Naive thymus-derived CD4-positive, alpha-beta T cell (primary cell): ENCODE measurements at regions of chr7 and their contacts with region 1.

Region 1: DNA sequence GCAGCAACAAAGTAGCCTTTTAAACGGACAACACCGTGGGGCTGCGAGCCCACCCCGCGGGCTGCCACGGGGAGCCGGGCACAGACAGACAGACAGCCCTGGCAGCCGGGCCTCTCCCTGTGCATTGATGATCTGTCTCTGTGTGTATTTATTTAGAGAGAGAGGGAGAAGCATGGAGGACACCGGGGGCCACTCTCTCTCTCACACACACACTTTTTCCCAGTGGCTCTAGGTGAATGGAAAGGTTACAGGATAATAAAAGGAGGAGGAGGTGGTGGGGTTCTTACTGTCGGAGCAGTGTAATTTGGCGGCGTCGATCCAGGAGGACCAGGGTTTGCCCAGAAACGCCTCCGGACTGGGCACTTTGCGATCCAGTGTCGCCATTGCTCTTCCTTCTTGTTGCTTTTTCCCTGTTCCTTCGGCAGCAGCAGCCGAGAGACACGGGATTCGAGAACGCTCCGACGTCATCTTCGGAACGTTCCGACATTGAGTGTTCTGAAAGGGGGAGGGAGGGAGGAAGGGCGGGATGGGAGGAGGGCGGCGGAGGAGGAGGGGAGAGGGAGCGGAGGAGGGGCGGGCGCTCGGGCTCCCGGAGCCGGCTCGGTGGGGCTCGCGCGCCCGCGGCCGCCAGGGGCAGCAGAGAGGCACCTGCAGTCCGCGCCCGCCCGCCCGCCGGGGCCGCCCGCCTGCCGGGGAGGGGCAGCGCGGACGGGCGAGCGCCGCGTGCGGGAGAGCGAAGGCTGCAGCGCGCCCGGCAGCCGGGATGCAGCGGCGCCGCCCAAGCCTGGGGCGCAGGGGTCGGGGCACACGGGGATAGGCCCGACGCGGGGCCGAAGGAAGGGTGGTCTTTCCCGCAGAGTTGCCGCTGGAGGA is at the start of gene ATXN7L1:
- DNase-seq: peak; percentile 75 to 94 (median 87)
- ATAC-seq: peak; percentile 99
- H3K4me3 ChIP-seq: peak within 1 kb of the TSS; percentile 97
- H3K4me3 Mint-ChIP-seq: peak within 1 kb of the TSS; percentile 90 to 100 (median 99)
- H3K27ac ChIP-seq: peak within 1 kb of the TSS; percentile 81
- H3K27ac Mint-ChIP-seq: peak within 1 kb of the TSS; percentile 85 to 99 (median 98)
- H3K4me1 ChIP-seq: peaks cover 10 to 33% of the 10 kb centered on the region in 2 donors
- H3K4me1 Mint-ChIP-seq: peaks cover 34 to 73% (median 52%) of the 10 kb centered on the region in 7 donors
- H3K27me3 ChIP-seq: no peaks in the 10 kb centered on the region
- H3K27me3 Mint-ChIP-seq: peaks cover 0 to 34% (median 0%) of the 10 kb centered on the region in 5 donors
- total RNA-seq, gene ATXN7L1: 18.5 to 52.4 (median 46.7) TPM

Region 2: DNA sequence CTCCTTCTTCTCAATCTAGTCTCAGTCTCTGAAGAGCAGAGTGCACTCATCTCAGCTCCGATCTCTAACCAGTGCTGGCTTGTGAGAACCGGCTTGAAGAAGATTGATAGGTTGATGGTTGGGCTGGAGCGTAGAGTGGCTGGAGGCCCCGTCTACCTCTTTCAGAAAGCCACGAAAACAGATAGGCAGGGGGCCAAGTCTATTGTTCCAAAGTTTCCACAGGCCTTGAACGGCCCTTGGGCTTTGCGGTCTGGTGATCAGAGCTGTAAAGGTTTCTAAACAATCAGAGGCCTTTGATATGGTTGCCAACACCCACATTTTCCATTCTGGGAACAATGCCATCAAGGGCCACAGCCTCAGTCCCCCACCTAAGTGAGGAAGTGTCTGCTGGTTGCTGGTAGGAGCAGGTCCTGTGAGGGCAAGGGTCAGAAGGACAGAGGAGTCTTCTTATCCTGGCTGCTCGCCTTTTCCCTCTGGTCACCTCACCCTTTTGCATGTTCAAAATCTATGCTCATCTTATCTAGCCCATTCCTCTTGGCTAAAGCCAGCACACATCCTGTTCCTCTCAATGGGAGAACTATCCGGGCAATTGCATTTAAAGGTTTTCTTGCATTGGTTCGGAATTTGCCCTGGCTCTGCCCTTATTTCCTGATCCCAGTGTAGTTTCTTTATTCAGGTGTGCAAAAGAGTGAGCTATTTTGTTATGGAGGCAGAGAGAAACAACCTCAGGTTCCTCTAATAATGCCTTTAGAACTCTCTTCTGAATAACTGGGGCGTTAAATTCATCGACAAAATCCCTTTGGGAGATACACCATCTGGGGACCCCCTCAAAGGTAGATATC is 932.6 kb before region 1 on chr7:
- CTCF ChIA-PET with region 1: no interaction called
- POLR2A ChIA-PET with region 1: no interaction called
- intact Hi-C with region 1: loop called in 1 of 2 experiments (anchors 5 kb)
- DNase-seq: peak; percentile 31 to 85 (median 68)
- ATAC-seq: peak; percentile 23
- H3K4me3 ChIP-seq: peak overlapping the region; percentile 40
- H3K4me3 Mint-ChIP-seq: peak overlapping the region; percentile 77 to 95 (median 88)
- H3K27ac ChIP-seq: peak overlapping the region; percentile 87
- H3K27ac Mint-ChIP-seq: peak overlapping the region; percentile 95 to 100 (median 100)
- H3K4me1 ChIP-seq: peaks cover 46 to 50% of the 10 kb centered on the region in 2 donors
- H3K4me1 Mint-ChIP-seq: peaks cover 45 to 79% (median 70%) of the 10 kb centered on the region in 7 donors
- H3K27me3 ChIP-seq: no peaks in the 10 kb centered on the region
- H3K27me3 Mint-ChIP-seq: peaks cover 0 to 2% (median 0%) of the 10 kb centered on the region in 5 donors

Region 3: GRCh38 chr7:105678811-105679495 is 197.4 kb before region 1 on chr7:
- CTCF ChIA-PET with region 1: no interaction called
- POLR2A ChIA-PET with region 1: no interaction called
- intact Hi-C with region 1: loop called (anchors 1 to 5 kb)
- DNase-seq: peak in 5 of 9 donors; percentile 11 to 33 (median 26)
- ATAC-seq: peak; percentile 47
- H3K4me3 ChIP-seq: peak overlapping the region; percentile 30
- H3K4me3 Mint-ChIP-seq: peak overlapping the region; percentile 76 to 97 (median 86)
- H3K27ac ChIP-seq: peak overlapping the region; percentile 59
- H3K27ac Mint-ChIP-seq: peak overlapping the region; percentile 87 to 99 (median 95)
- H3K4me1 ChIP-seq: peaks cover 41 to 43% of the 10 kb centered on the region in 2 donors
- H3K4me1 Mint-ChIP-seq: peaks cover 56 to 94% (median 86%) of the 10 kb centered on the region in 7 donors
- H3K27me3 ChIP-seq: no peaks in the 10 kb centered on the region
- H3K27me3 Mint-ChIP-seq: no peaks in the 10 kb centered on the region

Region 4: GRCh38 chr7:105700793-105701192 is 175.5 kb before region 1 on chr7:
- CTCF ChIA-PET with region 1: no interaction called
- POLR2A ChIA-PET with region 1: no interaction called
- intact Hi-C with region 1: no loop called
- DNase-seq: no peak
- ATAC-seq: no peak
- H3K4me3 ChIP-seq: no peak overlapping the region
- H3K4me3 Mint-ChIP-seq: no peak overlapping the region
- H3K27ac ChIP-seq: no peak overlapping the region
- H3K27ac Mint-ChIP-seq: no peak overlapping the region
- H3K4me1 ChIP-seq: no peaks in the 10 kb centered on the region
- H3K4me1 Mint-ChIP-seq: peaks cover 0 to 7% (median 0%) of the 10 kb centered on the region in 7 donors
- H3K27me3 ChIP-seq: no peaks in the 10 kb centered on the region
- H3K27me3 Mint-ChIP-seq: peaks cover 0 to 4% (median 0%) of the 10 kb centered on the region in 5 donors

Region 5: DNA sequence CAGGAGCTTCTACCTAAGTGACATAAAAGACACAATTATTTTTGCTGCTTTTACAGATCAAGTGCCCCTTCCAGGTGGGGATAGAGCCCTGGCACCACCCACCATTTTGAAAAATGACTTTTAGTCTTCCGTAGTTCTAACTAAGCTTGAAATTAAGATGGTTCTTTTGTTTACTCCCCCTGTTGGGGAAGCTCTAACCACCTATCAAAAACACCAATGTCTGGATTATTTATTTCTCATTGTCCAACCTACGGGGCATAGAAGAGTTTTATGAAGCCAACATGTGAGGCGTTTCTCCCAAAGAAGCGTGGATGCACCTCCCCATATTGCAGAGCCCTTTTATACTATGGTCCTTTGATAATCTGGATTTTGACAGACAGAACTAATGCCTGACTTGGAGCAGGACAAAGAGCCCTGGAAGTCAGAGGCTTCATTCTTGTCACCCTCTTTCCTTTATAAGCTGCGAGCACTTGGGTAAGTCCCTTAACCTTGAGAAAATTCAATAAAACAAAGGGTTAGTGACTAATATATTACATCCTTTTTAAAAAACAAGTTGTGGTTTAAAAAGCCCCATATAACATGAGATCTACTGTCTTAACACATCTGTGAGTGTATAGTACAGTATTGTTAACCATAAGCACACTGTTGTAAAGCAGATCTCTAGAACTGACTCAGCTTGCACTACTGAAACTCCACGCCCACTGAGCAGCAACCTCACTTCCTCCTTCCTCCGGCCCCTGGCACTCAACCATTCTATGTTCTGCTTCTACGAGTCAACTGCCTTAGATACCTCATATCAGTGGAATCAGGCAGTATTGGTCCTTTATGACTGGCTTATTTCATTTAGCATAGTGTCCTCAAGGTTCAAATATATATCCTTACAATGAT is 67.4 kb before region 1 on chr7:
- CTCF ChIA-PET with region 1: interaction called, 7 read pairs
- POLR2A ChIA-PET with region 1: interaction called, 3 read pairs
- intact Hi-C with region 1: loop called (anchors 1 kb)
- DNase-seq: peak; percentile 11 to 77 (median 38)
- ATAC-seq: peak; percentile 94
- H3K4me3 ChIP-seq: peak overlapping the region; percentile 25
- H3K4me3 Mint-ChIP-seq: peak overlapping the region in 8 of 10 donors; percentile 1 to 68 (median 31)
- H3K27ac ChIP-seq: peak overlapping the region; percentile 15
- H3K27ac Mint-ChIP-seq: peak overlapping the region in 8 of 9 donors; percentile 0 to 93 (median 45)
- H3K4me1 ChIP-seq: peaks cover 33 to 50% of the 10 kb centered on the region in 2 donors
- H3K4me1 Mint-ChIP-seq: peaks cover 40 to 73% (median 65%) of the 10 kb centered on the region in 7 donors
- H3K27me3 ChIP-seq: no peaks in the 10 kb centered on the region
- H3K27me3 Mint-ChIP-seq: no peaks in the 10 kb centered on the region

Region 6: DNA sequence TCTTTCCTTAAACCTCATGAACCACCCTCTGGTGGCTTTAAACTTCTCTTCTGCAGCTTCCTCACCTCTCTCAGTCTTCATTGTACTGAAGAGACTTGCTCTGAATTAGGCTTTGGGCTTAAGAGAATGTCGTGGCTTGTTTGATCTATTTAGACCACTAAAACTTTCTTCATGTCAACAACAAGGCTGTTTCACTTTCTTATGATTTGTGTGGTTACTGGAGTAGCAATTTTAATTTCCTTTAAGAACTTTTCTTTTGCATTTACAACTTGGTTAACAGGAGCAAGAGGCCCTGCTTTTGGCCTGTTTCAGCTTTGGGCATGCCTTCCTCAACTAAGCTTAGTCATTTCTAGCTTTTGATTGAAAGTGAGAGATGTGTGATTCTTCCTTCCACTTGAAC is 48.6 kb after region 1 on chr7:
- CTCF ChIA-PET with region 1: interaction called, 4 read pairs
- POLR2A ChIA-PET with region 1: interaction called, 3 read pairs
- intact Hi-C with region 1: loop called (anchors 2 to 5 kb)
- DNase-seq: peak in 7 of 9 donors; percentile 36 to 84 (median 74)
- ATAC-seq: peak; percentile 90
- H3K4me3 ChIP-seq: no peak overlapping the region
- H3K4me3 Mint-ChIP-seq: peak overlapping the region; percentile 6 to 65 (median 33)
- H3K27ac ChIP-seq: peak overlapping the region; percentile 46
- H3K27ac Mint-ChIP-seq: peak overlapping the region; percentile 47 to 92 (median 84)
- H3K4me1 ChIP-seq: peaks cover 12 to 18% of the 10 kb centered on the region in 2 donors
- H3K4me1 Mint-ChIP-seq: peaks cover 20 to 46% (median 40%) of the 10 kb centered on the region in 7 donors
- H3K27me3 ChIP-seq: no peaks in the 10 kb centered on the region
- H3K27me3 Mint-ChIP-seq: peaks cover 0 to 38% (median 0%) of the 10 kb centered on the region in 5 donors

Region 7: DNA sequence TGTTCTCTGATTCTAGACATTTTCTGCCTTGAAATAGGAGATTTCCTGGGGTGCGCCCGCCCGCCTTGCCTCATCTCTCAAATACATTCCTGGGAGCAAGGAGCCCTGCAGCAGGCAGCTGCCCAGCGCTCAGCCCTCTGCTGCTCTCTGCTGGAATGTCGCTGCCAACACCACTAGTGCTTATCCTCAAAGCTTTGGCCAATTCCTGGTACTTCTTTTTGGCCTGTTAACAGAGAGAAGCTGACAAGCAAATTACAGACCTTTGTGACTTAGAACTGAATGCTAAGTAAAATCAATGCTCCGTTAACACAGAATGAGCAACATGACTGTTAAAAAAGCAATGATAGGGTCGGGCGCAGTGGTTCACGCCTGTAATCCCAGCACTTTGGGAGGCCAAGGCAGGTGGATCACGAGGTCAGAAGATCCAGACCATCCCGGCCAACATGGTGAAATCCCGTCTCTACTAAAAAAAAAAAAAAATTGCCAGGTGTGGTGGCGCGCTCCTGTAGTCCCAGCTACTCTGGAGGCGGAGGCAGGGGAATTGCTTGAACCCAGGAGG is 277.6 kb after region 1 on chr7:
- CTCF ChIA-PET with region 1: no interaction called
- POLR2A ChIA-PET with region 1: no interaction called
- intact Hi-C with region 1: loop called in 1 of 2 experiments (anchors 1 kb)
- DNase-seq: peak; percentile 51 to 76 (median 66)
- ATAC-seq: peak; percentile 95
- H3K4me3 ChIP-seq: no peak overlapping the region
- H3K4me3 Mint-ChIP-seq: peak overlapping the region in 8 of 10 donors; percentile 7 to 76 (median 58)
- H3K27ac ChIP-seq: no peak overlapping the region
- H3K27ac Mint-ChIP-seq: peak overlapping the region in 1 of 9 donors; percentile 82
- H3K4me1 ChIP-seq: peaks cover 0 to 8% of the 10 kb centered on the region in 2 donors
- H3K4me1 Mint-ChIP-seq: peaks cover 0 to 13% (median 8%) of the 10 kb centered on the region in 7 donors
- H3K27me3 ChIP-seq: peaks cover 0 to 4% of the 10 kb centered on the region in 2 donors
- H3K27me3 Mint-ChIP-seq: peaks cover 0 to 33% (median 22%) of the 10 kb centered on the region in 5 donors